Activated T-helper 1 cell treated with anti-CD3 and anti-CD28 coated beads, Interleukin-12 subunit alpha, Interleukin-12 subunit beta, Interleukin-2, Interleukin-4 antibody, amounts not matched to agents 30 ng/mL and 10 ng/mL and 1 ng/mL, durations not matched to agents 14 hours and 24 hours and 36 hours (primary cell): ENCODE measurements at regions of chr2 and their contacts with region 1.

Region 1: DNA sequence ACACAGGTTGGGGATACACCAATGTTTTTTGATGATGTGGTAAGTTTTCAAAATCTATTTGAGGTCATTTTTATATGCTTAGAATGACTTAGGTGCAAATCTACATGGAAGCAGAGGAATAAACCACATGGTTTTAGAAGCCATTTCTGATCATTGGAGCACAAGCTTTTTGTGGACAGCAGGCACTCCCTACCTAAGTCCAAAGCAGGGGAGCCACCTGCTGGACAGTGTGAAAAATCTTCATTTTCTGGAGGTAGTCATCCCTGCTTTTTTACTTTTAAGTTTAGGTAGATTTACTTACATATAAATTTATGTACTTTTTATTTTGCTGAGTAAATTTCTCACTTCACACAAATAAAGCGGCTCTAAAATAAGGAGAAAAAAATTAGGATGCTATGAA is 323.2 kb downstream of the PLCL1 start:
- DNase-seq: peak; percentile 3
- H3K4me3 Mint-ChIP-seq: no peak overlapping the region
- H3K27ac Mint-ChIP-seq: no peak overlapping the region
- H3K4me1 Mint-ChIP-seq: no peaks in the 10 kb centered on the region
- H3K27me3 Mint-ChIP-seq: peaks cover 5% of the 10 kb centered on the region

Region 2: DNA sequence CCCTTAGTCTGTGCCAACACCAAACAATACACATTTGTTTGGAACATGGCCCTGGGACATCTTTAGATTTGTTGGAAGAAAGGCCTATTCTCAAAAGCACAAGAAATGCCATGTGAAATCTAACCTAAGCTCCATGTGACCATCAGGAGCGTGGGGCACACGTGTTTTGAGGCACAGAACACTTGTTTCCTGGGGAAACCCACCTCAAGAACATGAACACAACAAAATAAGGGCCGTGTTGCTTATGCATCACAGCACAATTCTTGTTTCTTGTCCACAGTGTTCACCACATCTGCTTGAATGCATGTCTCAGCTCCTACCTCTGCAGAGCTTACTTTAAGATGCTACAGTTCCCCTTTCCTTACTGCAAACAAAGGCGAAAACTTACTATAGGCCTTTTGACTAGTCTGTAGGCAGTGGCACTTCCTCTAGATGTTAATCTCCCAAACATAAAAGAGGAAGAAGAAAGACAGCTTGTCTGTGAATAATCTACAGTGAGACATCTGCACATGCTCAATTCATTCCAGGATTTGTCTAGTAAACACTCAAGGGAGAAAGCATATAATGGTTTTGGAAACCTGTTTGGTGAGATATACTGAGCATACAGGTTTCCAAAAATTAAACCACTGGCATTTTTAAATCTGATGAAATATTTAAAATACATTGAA is 982.0 kb before region 1 on chr2:
- intact Hi-C with region 1: no loop called
- DNase-seq: no peak
- H3K4me3 Mint-ChIP-seq: no peak overlapping the region
- H3K27ac Mint-ChIP-seq: peak overlapping the region; percentile 87
- H3K4me1 Mint-ChIP-seq: peaks cover 68% of the 10 kb centered on the region
- H3K27me3 Mint-ChIP-seq: no peaks in the 10 kb centered on the region

Region 3: GRCh38 chr2:197851451-197851850 is 276.2 kb before region 1 on chr2:
- intact Hi-C with region 1: loop called (anchors 1 kb)
- DNase-seq: no peak
- H3K4me3 Mint-ChIP-seq: no peak overlapping the region
- H3K27ac Mint-ChIP-seq: no peak overlapping the region
- H3K4me1 Mint-ChIP-seq: peaks cover 22% of the 10 kb centered on the region
- H3K27me3 Mint-ChIP-seq: no peaks in the 10 kb centered on the region

Region 4: GRCh38 chr2:198053776-198054698 is 73.6 kb before region 1 on chr2:
- intact Hi-C with region 1: loop called (anchors 2 kb)
- DNase-seq: peak; percentile 10
- H3K4me3 Mint-ChIP-seq: no peak overlapping the region
- H3K27ac Mint-ChIP-seq: no peak overlapping the region
- H3K4me1 Mint-ChIP-seq: no peaks in the 10 kb centered on the region
- H3K27me3 Mint-ChIP-seq: peaks cover 3% of the 10 kb centered on the region

Region 5: GRCh38 chr2:198296665-198297308 is 169.2 kb after region 1 on chr2:
- intact Hi-C with region 1: loop called (anchors 1 kb)
- DNase-seq: peak; percentile 20
- H3K4me3 Mint-ChIP-seq: no peak overlapping the region
- H3K27ac Mint-ChIP-seq: no peak overlapping the region
- H3K4me1 Mint-ChIP-seq: no peaks in the 10 kb centered on the region
- H3K27me3 Mint-ChIP-seq: peaks cover 20% of the 10 kb centered on the region

Region 6: GRCh38 chr2:198930170-198930569 is 802.5 kb after region 1 on chr2:
- intact Hi-C with region 1: no loop called
- DNase-seq: no peak
- H3K4me3 Mint-ChIP-seq: no peak overlapping the region
- H3K27ac Mint-ChIP-seq: no peak overlapping the region
- H3K4me1 Mint-ChIP-seq: no peaks in the 10 kb centered on the region
- H3K27me3 Mint-ChIP-seq: no peaks in the 10 kb centered on the region